ENCODE measurements at regions of chr5 and their contacts with region 1.

Region 1: GRCh38 chr5:99104538-99105132 is 175.8 kb upstream of the CHD1 start:
- DNase-seq: no peak
- H3K4me3 Mint-ChIP-seq: no peak overlapping the region
- H3K27ac Mint-ChIP-seq: no peak overlapping the region
- H3K4me1 Mint-ChIP-seq: no peaks in the 10 kb centered on the region
- H3K27me3 Mint-ChIP-seq: peaks cover 4% of the 10 kb centered on the region

Region 2: GRCh38 chr5:98827161-98827560 is 277.5 kb before region 1 on chr5:
- CTCF ChIA-PET with region 1: no interaction called
- POLR2A ChIA-PET with region 1: no interaction called
- intact Hi-C with region 1: no loop called
- DNase-seq: no peak
- H3K4me3 Mint-ChIP-seq: no peak overlapping the region
- H3K27ac Mint-ChIP-seq: no peak overlapping the region
- H3K4me1 Mint-ChIP-seq: no peaks in the 10 kb centered on the region
- H3K27me3 Mint-ChIP-seq: no peaks in the 10 kb centered on the region

Region 3: DNA sequence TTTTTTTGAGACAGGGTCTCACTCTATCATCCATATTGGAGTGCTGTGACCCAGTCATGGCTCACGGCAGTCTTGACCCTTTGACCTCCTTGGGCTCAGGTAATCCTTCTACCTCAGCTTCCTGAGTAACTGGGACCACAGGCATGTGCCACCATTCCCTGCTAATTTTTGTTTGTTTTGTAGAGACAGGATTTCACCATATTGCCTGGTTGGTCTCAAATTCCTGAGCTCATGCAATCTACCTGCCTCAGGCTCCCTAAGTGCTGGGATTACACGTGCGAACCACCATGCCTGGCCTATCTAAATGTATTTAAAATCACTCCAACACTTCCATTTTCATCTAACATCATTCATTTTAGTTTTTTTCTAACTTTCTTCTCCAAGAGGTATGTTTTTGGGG is 14.7 kb after region 1 on chr5:
- CTCF ChIA-PET with region 1: interaction called, 25 read pairs
- POLR2A ChIA-PET with region 1: no interaction called
- intact Hi-C with region 1: no loop called
- DNase-seq: no peak
- H3K4me3 Mint-ChIP-seq: no peak overlapping the region
- H3K27ac Mint-ChIP-seq: no peak overlapping the region
- H3K4me1 Mint-ChIP-seq: no peaks in the 10 kb centered on the region
- H3K27me3 Mint-ChIP-seq: peaks cover 4% of the 10 kb centered on the region

Region 4: DNA sequence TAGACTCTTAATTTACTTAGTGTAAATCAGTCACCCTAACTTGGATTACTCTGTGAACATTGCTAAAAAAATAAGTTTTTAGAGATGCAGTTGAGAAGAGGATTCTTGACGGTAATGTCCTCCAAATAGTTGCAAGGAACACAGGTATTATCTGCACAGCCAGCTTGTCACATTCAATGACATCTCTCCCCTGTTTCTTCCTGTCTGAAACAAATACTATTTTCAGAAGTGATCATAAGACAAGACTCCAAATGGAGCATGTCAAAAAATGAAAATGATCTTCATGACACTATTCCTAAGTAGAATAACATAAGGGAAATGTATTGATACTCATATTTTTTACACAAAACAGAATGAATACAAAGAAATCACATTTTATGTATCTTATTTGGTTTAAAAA is 52.1 kb after region 1 on chr5:
- CTCF ChIA-PET with region 1: no interaction called
- POLR2A ChIA-PET with region 1: no interaction called
- intact Hi-C with region 1: no loop called
- DNase-seq: no peak
- H3K4me3 Mint-ChIP-seq: no peak overlapping the region
- H3K27ac Mint-ChIP-seq: no peak overlapping the region
- H3K4me1 Mint-ChIP-seq: no peaks in the 10 kb centered on the region
- H3K27me3 Mint-ChIP-seq: no peaks in the 10 kb centered on the region

Region 5: DNA sequence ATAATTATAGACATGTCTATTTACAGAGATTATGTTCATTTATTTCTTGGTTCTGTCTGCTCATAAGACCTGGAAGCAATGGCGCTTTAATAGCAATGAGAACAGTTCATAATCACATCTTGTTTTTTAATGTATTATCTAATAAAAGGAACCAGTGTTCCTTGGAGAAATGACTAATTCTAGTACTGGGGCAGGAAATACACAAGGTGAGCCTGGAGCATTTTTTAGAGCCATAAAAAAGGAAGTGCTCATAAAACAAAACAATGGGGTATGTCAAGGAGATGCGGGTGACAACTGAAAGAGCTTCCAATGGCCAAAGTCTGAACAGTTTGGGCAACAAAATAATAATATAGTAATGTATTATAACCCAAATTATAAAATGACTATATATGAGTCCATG is 356.1 kb after region 1 on chr5:
- CTCF ChIA-PET with region 1: no interaction called
- POLR2A ChIA-PET with region 1: no interaction called
- intact Hi-C with region 1: loop called (anchors 5 kb)
- DNase-seq: no peak
- H3K4me3 Mint-ChIP-seq: no peak overlapping the region
- H3K27ac Mint-ChIP-seq: no peak overlapping the region
- H3K4me1 Mint-ChIP-seq: no peaks in the 10 kb centered on the region
- H3K27me3 Mint-ChIP-seq: no peaks in the 10 kb centered on the region

Measured in activated CD4-positive, alpha-beta memory T cell treated with anti-CD3 and anti-CD28 coated beads for 36 hours (primary cell).